ENCODE measurements at regions of chr5 and their contacts with region 1.

Region 1: GRCh38 chr5:140073296-140073695 is 30.2 kb upstream of the NRG2 start:
- DNase-seq: no peak
- H3K4me3 Mint-ChIP-seq: no peak overlapping the region
- H3K27ac Mint-ChIP-seq: no peak overlapping the region
- H3K4me1 Mint-ChIP-seq: no peaks in the 10 kb centered on the region
- H3K27me3 Mint-ChIP-seq: peaks cover 3% of the 10 kb centered on the region

Region 2: GRCh38 chr5:140107312-140108083 is 34.2 kb after region 1 on chr5:
- CTCF ChIA-PET with region 1: interaction called, 11 read pairs
- intact Hi-C with region 1: loop called (anchors 2 kb)
- DNase-seq: peak; percentile 91
- H3K4me3 Mint-ChIP-seq: peak overlapping the region; percentile 98
- H3K27ac Mint-ChIP-seq: peak overlapping the region; percentile 91
- H3K4me1 Mint-ChIP-seq: peaks cover 39% of the 10 kb centered on the region
- H3K27me3 Mint-ChIP-seq: no peaks in the 10 kb centered on the region

Region 3: DNA sequence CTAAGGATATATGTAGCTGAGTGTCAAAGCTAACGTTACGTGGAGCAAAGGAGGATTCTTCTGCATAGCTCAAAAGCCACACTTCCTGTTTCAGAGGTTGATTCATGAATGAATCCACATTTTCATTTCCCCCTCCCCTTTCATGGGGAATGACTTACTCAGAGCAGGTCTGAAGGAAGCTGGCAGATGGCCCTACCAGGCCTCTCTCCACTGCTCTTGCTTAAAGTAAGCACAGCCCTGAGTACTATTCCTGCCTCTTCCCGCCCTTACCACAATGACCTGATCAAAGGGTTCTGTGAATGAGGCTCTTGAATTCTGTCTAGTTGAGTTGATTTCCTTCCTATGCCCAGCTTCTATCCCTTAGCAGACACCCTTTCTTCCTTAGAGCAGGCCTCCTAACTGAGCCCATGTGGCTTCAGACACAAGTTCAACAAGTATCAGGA is 58.7 kb after region 1 on chr5:
- CTCF ChIA-PET with region 1: interaction called, 16 read pairs
- intact Hi-C with region 1: no loop called
- DNase-seq: peak; percentile 55
- H3K4me3 Mint-ChIP-seq: no peak overlapping the region
- H3K27ac Mint-ChIP-seq: no peak overlapping the region
- H3K4me1 Mint-ChIP-seq: peaks cover 39% of the 10 kb centered on the region
- H3K27me3 Mint-ChIP-seq: no peaks in the 10 kb centered on the region

Region 4: GRCh38 chr5:140145818-140146522 is 72.7 kb after region 1 on chr5:
- CTCF ChIA-PET with region 1: interaction called, 80 read pairs
- intact Hi-C with region 1: loop called (anchors 1 kb)
- DNase-seq: peak; percentile 64
- H3K4me3 Mint-ChIP-seq: peak overlapping the region; percentile 52
- H3K27ac Mint-ChIP-seq: no peak overlapping the region
- H3K4me1 Mint-ChIP-seq: peaks cover 15% of the 10 kb centered on the region
- H3K27me3 Mint-ChIP-seq: peaks cover 20% of the 10 kb centered on the region

Region 5: GRCh38 chr5:140357726-140358093 is 284.4 kb after region 1 on chr5:
- CTCF ChIA-PET with region 1: no interaction called
- intact Hi-C with region 1: loop called (anchors 5 kb)
- DNase-seq: peak; percentile 85
- H3K4me3 Mint-ChIP-seq: peak overlapping the region; percentile 56
- H3K27ac Mint-ChIP-seq: no peak overlapping the region
- H3K4me1 Mint-ChIP-seq: peaks cover 8% of the 10 kb centered on the region
- H3K27me3 Mint-ChIP-seq: peaks cover 3% of the 10 kb centered on the region

Measured in activated naive CD4-positive, alpha-beta T cell treated with anti-CD3 and anti-CD28 coated beads for 36 hours (primary cell).